Activated CD8-positive, alpha-beta T cell treated with anti-CD3 and anti-CD28 coated beads for 36 hours (primary cell): ENCODE measurements at regions of chrX and their contacts with region 1.

Region 1: GRCh38 chrX:118528071-118528737 is 32.6 kb downstream of the DOCK11 start:
- DNase-seq: peak; percentile 76
- ATAC-seq: peak; percentile 70
- H3K4me3 Mint-ChIP-seq: peak overlapping the region; percentile 87
- H3K27ac Mint-ChIP-seq: peak overlapping the region; percentile 97
- H3K4me1 Mint-ChIP-seq: peaks cover 65% of the 10 kb centered on the region
- H3K27me3 Mint-ChIP-seq: no peaks in the 10 kb centered on the region
- CTCF ChIP-seq: no peak

Region 2: GRCh38 chrX:118495061-118495921 is 32.9 kb before region 1 on chrX and contains the start of gene DOCK11:
- CTCF ChIA-PET with region 1: interaction called, 5 read pairs
- POLR2A ChIA-PET with region 1: interaction called, 39 read pairs
- intact Hi-C with region 1: no loop called
- DNase-seq: peak; percentile 87
- ATAC-seq: peak; percentile 84
- H3K4me3 Mint-ChIP-seq: peak within 1 kb of the TSS; percentile 99
- H3K27ac Mint-ChIP-seq: peak within 1 kb of the TSS; percentile 98
- H3K4me1 Mint-ChIP-seq: peaks cover 23% of the 10 kb centered on the region
- H3K27me3 Mint-ChIP-seq: no peaks in the 10 kb centered on the region
- CTCF ChIP-seq: no peak
- total RNA-seq, gene DOCK11: 45.1 to 49.5 TPM

Region 3: GRCh38 chrX:118502161-118502789 is 25.9 kb before region 1 on chrX:
- CTCF ChIA-PET with region 1: interaction called, 5 read pairs
- POLR2A ChIA-PET with region 1: interaction called, 39 read pairs
- intact Hi-C with region 1: loop called (anchors 2 kb)
- DNase-seq: no peak
- ATAC-seq: no peak
- H3K4me3 Mint-ChIP-seq: peak overlapping the region; percentile 67
- H3K27ac Mint-ChIP-seq: peak overlapping the region; percentile 97
- H3K4me1 Mint-ChIP-seq: peaks cover 61% of the 10 kb centered on the region
- H3K27me3 Mint-ChIP-seq: no peaks in the 10 kb centered on the region
- CTCF ChIP-seq: no peak

Region 4: GRCh38 chrX:118588715-118589114 is 60.5 kb after region 1 on chrX:
- CTCF ChIA-PET with region 1: no interaction called
- POLR2A ChIA-PET with region 1: no interaction called
- intact Hi-C with region 1: no loop called
- DNase-seq: no peak
- ATAC-seq: no peak
- H3K4me3 Mint-ChIP-seq: no peak overlapping the region
- H3K27ac Mint-ChIP-seq: peak overlapping the region; percentile 38
- H3K4me1 Mint-ChIP-seq: peaks cover 8% of the 10 kb centered on the region
- H3K27me3 Mint-ChIP-seq: no peaks in the 10 kb centered on the region
- CTCF ChIP-seq: no peak